ENCODE measurements at regions of chr18 and their contacts with region 1.

Region 1: DNA sequence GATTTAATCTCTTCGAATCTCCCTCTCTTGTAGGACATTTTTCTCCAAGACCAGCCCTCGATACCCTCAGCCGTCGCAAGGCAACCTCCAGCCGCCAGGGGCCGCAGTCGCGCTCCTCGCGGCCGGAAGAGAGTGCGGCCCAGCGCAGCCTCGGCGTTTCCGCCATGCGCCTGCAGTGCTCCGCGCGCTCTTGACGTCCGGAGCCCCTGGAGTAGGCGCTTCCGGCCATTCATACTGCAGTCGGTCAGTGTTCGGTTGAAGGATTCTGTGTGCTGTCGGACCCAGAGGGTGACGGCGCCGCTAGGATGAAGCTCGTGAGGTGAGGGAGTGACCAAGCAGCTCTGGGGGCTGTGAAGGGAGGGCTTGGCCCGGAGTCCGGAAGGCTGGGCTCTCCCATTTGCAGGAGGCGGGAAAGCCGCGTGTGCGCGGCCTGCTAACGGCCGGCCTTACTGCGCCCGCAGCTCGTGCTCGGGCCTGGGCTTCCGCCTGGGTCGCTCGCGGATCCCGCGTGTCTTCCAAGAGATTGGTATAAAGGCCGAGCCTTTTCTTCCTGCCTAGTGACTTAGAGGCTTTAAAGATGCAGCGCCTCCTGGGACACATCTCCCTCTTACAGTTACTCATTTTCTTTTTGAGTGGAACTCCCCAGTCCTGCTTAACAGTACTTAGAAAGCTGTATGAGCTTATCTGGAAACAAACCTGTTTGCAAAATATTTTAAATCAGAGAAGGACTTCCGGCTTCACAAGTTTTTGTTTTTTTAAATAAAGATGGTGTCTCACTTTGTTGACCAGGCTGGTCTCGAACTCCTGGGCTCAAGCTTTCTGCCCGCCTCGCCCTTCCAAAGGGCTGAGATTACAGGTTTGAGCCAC is at the start of gene SNRPD1:
- DNase-seq: peak; percentile 95
- ATAC-seq: peak; percentile 100
- H3K4me3 Mint-ChIP-seq: peak within 1 kb of the TSS; percentile 98
- H3K27ac Mint-ChIP-seq: peak within 1 kb of the TSS; percentile 99
- H3K4me1 Mint-ChIP-seq: peaks cover 35% of the 10 kb centered on the region
- H3K27me3 Mint-ChIP-seq: no peaks in the 10 kb centered on the region
- CTCF ChIP-seq: peak; percentile 47
- total RNA-seq, gene SNRPD1: 58.1 and 60.8 TPM in 2 replicates

Region 2: GRCh38 chr18:21656402-21656801 is 44.0 kb after region 1 on chr18:
- CTCF ChIA-PET with region 1: no interaction called
- POLR2A ChIA-PET with region 1: no interaction called
- intact Hi-C with region 1: no loop called
- DNase-seq: no peak
- ATAC-seq: no peak
- H3K4me3 Mint-ChIP-seq: no peak overlapping the region
- H3K27ac Mint-ChIP-seq: no peak overlapping the region
- H3K4me1 Mint-ChIP-seq: no peaks in the 10 kb centered on the region
- H3K27me3 Mint-ChIP-seq: no peaks in the 10 kb centered on the region
- CTCF ChIP-seq: no peak

Region 3: DNA sequence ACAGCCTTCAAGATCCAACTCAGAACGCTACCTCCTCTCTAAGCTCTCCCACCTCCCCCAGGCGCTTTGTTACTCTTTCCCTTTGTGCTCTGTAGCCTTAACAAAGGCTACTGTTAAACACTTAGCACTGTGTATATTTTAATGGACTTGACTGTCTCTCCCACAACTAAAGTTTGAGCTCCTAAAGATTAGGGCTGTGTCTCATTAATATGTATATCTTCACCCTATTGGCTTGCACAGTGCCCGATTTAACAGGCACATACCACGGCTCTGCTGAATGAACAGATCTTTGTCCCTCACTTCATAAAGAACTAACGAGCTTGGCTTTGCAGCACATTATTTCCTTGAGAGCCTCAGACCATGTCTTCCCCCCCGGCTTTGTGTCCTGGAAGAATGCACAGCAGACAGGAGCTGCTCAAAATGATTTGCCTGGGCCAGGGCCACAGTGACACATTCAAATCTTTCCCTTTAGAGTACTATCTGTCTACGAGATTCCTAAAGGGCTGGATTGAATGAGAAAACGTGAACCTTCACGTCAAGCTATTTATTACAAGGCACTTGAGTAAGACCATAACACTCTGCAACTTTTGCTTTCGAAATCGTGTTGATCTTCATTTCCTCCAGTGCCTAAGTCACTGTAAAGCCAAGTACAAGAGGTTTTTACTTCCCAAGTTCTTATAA is 70.2 kb after region 1 on chr18:
- CTCF ChIA-PET with region 1: interaction called, 3 read pairs
- POLR2A ChIA-PET with region 1: interaction called, 13 read pairs
- intact Hi-C with region 1: loop called (anchors 1 kb)
- DNase-seq: no peak
- ATAC-seq: peak; percentile 54
- H3K4me3 Mint-ChIP-seq: no peak overlapping the region
- H3K27ac Mint-ChIP-seq: no peak overlapping the region
- H3K4me1 Mint-ChIP-seq: peaks cover 30% of the 10 kb centered on the region
- H3K27me3 Mint-ChIP-seq: no peaks in the 10 kb centered on the region
- CTCF ChIP-seq: no peak

Region 4: GRCh38 chr18:21689736-21690135 is 77.4 kb after region 1 on chr18:
- CTCF ChIA-PET with region 1: no interaction called
- POLR2A ChIA-PET with region 1: interaction called, 13 read pairs
- intact Hi-C with region 1: loop called (anchors 1 kb)
- DNase-seq: no peak
- ATAC-seq: no peak
- H3K4me3 Mint-ChIP-seq: no peak overlapping the region
- H3K27ac Mint-ChIP-seq: no peak overlapping the region
- H3K4me1 Mint-ChIP-seq: peaks cover 28% of the 10 kb centered on the region
- H3K27me3 Mint-ChIP-seq: no peaks in the 10 kb centered on the region
- CTCF ChIP-seq: no peak

Region 5: DNA sequence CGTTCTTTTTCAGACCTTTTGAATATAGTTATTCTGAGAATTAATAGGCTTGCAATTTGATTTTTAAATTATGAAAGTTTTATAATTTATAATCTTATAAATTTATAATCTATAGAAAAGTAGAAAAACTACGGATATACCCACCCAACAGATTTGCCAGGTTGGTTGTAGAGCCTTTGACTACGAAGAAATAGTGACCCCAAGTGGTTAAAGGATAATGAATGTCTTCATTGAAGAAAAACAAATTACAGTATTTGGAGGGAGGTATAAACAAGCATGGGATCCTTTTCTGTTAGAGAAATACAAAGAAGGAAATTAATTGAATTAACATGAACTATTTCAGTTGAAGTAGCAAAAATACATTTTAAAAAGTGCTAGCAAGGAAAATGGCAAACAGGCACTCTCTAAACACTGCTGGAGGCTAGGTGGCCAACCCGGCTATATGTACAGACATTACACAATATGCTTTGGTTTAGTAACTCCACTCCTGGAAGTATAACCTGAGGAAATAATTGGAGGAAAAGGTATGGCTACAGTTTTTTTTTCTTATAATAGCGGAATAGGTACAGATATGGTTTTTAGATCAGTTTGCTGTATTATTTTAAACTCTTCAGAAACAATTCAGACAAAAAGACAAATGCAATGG is 239.1 kb after region 1 on chr18:
- CTCF ChIA-PET with region 1: interaction called, 5 read pairs
- POLR2A ChIA-PET with region 1: no interaction called
- intact Hi-C with region 1: loop called (anchors 1 kb)
- DNase-seq: no peak
- ATAC-seq: no peak
- H3K4me3 Mint-ChIP-seq: no peak overlapping the region
- H3K27ac Mint-ChIP-seq: no peak overlapping the region
- H3K4me1 Mint-ChIP-seq: peaks cover 20% of the 10 kb centered on the region
- H3K27me3 Mint-ChIP-seq: no peaks in the 10 kb centered on the region
- CTCF ChIP-seq: no peak

Measured in activated B cell treated with CpG ODN at 0.5 μM for 24 hours (primary cell).